Breast epithelium (tissue), 4 donors: ENCODE measurements at regions of chr10 and their contacts with region 1.

Region 1: DNA sequence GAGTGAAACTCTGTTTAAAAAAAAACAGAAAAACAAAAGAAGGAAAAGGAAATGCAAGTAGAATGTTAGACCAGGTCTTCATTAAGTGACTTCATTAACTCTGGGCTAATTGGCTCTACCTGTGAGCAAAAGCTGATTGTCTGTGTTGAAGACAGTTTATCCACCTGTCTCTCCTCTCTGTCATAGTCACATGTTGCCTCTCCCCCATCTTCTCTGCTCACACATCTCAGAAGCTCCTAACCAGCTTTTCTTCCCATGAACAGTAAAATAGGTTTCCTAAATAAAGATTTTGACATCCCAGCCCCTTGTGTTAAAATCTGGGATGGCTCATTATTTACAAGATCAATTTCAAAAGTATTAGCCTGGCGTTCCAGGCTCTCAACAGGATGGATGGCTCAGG is 222.7 kb downstream of the CACNB2 start:
- DNase-seq: no peak
- H3K4me3 ChIP-seq: no peak overlapping the region
- H3K27ac ChIP-seq: no peak overlapping the region
- H3K4me1 ChIP-seq: no peaks in the 10 kb centered on the region
- H3K27me3 ChIP-seq: no peaks in the 10 kb centered on the region
- CTCF ChIP-seq: no peak
- POLR2A ChIP-seq: no peak

Region 2: GRCh38 chr10:18229826-18230225 is 133.1 kb before region 1 on chr10:
- intact Hi-C with region 1: no loop called
- DNase-seq: no peak
- H3K4me3 ChIP-seq: no peak overlapping the region
- H3K27ac ChIP-seq: no peak overlapping the region
- H3K4me1 ChIP-seq: no peaks in the 10 kb centered on the region
- H3K27me3 ChIP-seq: no peaks in the 10 kb centered on the region
- CTCF ChIP-seq: no peak
- POLR2A ChIP-seq: no peak

Region 3: DNA sequence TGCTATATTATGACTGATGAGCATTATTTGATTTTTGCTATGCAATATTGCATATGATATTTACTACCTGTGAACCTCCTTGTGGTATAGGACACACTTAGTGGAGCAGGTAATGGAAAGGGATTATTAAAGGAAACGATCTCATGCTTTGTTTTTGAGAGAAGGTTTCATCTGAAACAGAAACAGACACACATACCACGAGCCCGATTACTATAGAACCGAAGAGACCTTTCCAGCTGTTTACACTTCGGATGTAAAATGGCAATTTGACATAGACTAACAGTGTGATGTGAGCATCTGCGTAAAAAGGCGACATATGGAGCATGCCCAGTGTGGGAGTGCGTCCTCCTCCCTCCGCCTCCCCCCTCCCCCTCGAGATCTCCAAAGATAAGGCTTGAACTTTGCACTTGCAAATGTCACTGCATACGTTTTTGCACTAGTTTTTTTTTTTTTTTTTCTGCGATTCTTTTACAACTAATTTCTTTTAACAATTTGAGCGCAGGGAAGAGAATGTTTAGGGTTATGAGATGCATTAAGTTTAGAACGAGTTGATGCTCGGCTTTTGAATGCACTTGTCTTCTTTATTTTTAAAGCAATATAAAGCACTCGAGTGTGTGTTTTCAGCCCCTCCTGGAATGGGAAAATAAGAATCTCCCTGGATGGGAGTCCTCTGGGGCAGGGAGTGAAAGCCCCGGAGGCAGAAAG is 37.5 kb after region 1 on chr10:
- intact Hi-C with region 1: no loop called
- DNase-seq: no peak
- H3K4me3 ChIP-seq: peak overlapping the region in 1 of 3 donors; percentile 22
- H3K27ac ChIP-seq: no peak overlapping the region
- H3K4me1 ChIP-seq: no peaks in the 10 kb centered on the region
- H3K27me3 ChIP-seq: no peaks in the 10 kb centered on the region
- CTCF ChIP-seq: no peak
- POLR2A ChIP-seq: no peak

Region 4: GRCh38 chr10:18421726-18422293 is 58.9 kb after region 1 on chr10:
- intact Hi-C with region 1: loop called (anchors 2 kb)
- DNase-seq: no peak
- H3K4me3 ChIP-seq: no peak overlapping the region
- H3K27ac ChIP-seq: no peak overlapping the region
- H3K4me1 ChIP-seq: no peaks in the 10 kb centered on the region
- H3K27me3 ChIP-seq: no peaks in the 10 kb centered on the region
- CTCF ChIP-seq: no peak
- POLR2A ChIP-seq: no peak